ENCODE measurements at regions of chr3 and their contacts with region 1.

Region 1: DNA sequence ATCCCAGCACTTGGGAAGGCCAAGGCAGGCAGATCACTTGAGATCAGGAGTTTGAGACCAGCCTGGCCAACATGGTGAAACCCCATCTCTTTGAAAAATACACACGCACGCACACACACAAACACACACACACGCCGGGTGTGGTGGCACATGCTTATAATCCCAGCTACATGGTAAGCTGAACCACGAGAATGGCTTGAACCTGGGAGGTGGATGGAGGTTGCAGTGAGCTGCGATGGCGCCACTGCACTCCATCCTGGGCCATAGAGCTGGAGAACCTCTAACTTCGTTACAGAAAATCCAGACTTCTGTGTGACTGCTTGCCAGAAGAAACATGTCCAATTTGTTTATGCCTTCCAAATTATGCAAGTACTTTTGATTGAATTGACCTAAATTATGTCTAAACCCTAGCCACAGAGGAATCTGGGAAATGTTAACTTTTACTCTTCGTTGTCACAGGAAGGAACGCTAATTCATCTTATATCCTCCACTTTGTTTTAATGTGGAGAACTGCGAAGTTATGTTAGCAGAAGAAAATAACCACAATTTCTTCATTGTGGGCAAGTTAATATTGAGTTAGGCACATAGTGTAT is 21.7 kb downstream of the TRIM59 start:
- DNase-seq: no peak
- H3K4me3 ChIP-seq: no peak overlapping the region
- H3K27ac ChIP-seq: no peak overlapping the region
- H3K4me1 ChIP-seq: no peaks in the 10 kb centered on the region
- H3K27me3 ChIP-seq: no peaks in the 10 kb centered on the region
- CTCF ChIP-seq: no peak

Region 2: GRCh38 chr3:160454995-160455394 is 27.1 kb after region 1 on chr3:
- CTCF ChIA-PET with region 1: no interaction called
- POLR2A ChIA-PET with region 1: no interaction called
- intact Hi-C with region 1: no loop called
- DNase-seq: no peak
- H3K4me3 ChIP-seq: no peak overlapping the region
- H3K27ac ChIP-seq: no peak overlapping the region
- H3K4me1 ChIP-seq: no peaks in the 10 kb centered on the region
- H3K27me3 ChIP-seq: no peaks in the 10 kb centered on the region
- CTCF ChIP-seq: no peak

Region 3: DNA sequence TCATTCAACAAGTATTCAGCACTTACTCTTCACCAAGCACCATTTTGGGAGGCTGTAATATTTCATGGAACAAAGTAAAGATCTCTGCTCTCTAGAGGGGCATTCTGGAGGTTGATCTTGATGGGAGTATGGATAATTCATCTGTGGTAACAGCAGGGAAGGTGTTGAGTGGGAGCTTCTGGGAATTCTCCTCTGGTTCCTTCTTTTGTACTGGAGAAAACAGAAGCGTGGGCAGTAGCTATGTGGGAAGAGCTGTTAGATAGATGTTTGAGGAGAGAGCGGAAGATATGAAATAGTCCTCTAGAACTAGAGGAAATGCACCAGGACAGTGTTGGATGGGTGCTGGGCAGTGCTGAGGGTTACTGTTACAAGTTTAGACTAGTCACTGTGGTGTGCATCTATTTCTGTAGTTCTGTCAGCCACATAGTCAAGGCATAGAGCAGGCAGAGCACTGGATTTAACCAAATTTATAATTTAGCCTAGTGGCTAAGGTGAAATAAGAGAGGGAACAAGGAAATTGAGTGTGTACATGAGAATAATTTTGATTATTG is 802.8 kb after region 1 on chr3:
- CTCF ChIA-PET with region 1: no interaction called
- POLR2A ChIA-PET with region 1: no interaction called
- intact Hi-C with region 1: loop called (anchors 10 kb)
- DNase-seq: no peak
- H3K4me3 ChIP-seq: no peak overlapping the region
- H3K27ac ChIP-seq: no peak overlapping the region
- H3K4me1 ChIP-seq: no peaks in the 10 kb centered on the region
- H3K27me3 ChIP-seq: no peaks in the 10 kb centered on the region
- CTCF ChIP-seq: no peak